Activated T-helper 2 cell treated with anti-CD3 and anti-CD28 coated beads, Interferon-gamma antibody, Interleukin-2, Interleukin-4, amounts not matched to agents 10 μg/mL and 5 μg/mL and 100 μg/mL, durations not matched to agents 14 hours and 24 hours and 36 hours (primary cell): ENCODE measurements at regions of chr12 and their contacts with region 1.

Region 1: DNA sequence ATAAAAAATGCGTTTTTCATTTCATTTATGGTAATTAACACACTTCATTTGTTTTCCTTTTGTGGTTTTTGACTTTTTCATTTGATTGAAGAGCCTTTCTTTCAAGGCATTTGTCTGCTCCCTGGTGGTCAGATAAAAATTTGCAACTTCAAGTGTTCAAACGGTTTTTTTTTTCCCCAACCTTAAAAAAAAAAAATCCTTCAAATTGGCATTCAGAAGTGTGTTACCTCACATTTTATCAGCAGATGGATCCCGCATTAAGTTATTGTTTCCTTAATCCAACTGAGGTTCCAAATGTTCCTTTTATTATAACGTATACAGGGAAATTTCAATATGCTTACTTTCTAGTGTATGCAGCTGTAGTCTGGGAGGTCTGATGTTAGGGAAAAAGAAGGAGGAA is 47.2 kb downstream of the MYF5 start:
- DNase-seq: no peak
- H3K4me3 Mint-ChIP-seq: no peak overlapping the region
- H3K27ac Mint-ChIP-seq: no peak overlapping the region
- H3K4me1 Mint-ChIP-seq: no peaks in the 10 kb centered on the region
- H3K27me3 Mint-ChIP-seq: peaks cover 3% of the 10 kb centered on the region

Region 2: DNA sequence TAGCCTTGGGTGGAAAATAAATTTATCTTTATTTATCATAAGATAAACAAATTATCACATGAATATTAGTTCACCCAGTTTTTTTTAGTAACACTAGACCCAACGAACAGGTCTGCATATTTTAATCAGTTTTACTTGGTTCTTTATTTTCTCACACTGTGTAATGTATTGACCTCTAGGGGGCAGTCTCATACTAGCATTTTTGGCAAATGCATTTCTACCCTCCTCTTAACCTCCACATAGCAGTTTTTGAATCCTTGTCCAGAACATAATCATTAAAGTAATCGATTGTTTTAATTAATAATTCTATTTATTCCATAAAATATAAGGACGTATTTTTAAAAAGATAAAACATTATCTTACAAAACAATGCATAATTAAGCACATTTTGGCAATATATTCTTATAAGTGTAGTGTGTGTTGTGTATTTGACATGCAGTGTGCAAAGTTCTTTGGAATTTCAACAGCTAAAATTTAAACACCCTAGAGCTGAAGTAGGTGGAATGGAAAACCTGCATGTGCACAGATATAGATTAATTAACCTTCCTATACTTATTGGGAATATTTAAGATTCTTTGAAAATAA is 351.4 kb before region 1 on chr12:
- intact Hi-C with region 1: loop called (anchors 2 kb)
- DNase-seq: no peak
- H3K4me3 Mint-ChIP-seq: no peak overlapping the region
- H3K27ac Mint-ChIP-seq: no peak overlapping the region
- H3K4me1 Mint-ChIP-seq: no peaks in the 10 kb centered on the region
- H3K27me3 Mint-ChIP-seq: no peaks in the 10 kb centered on the region

Region 3: DNA sequence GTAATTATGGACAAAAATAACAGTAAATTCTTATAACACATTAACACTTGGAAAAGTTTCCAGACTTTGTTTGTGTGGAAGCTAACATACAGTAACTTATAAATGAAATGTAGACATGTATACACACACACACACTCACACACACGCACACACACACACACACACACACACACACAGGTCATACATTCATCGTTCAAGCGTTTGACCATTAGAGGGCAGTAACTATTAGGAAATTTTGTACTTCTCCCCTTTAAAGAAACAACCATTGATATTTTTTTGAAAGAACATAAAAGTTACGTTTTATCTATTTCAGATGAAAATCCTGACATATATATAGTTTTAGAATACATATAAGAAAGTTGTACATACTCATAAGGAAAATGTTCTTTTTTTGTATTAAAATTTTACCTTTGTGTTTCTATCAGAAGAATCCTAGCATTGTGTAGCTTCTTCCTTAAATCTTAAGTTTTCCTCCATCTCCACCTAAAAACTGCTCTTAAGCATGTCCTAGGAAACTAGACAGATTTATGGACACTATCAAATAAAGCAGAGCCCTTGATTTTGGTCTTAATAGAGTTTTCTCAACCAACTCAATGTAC is 290.9 kb before region 1 on chr12:
- intact Hi-C with region 1: loop called (anchors 2 kb)
- DNase-seq: no peak
- H3K4me3 Mint-ChIP-seq: no peak overlapping the region
- H3K27ac Mint-ChIP-seq: no peak overlapping the region
- H3K4me1 Mint-ChIP-seq: no peaks in the 10 kb centered on the region
- H3K27me3 Mint-ChIP-seq: no peaks in the 10 kb centered on the region

Region 4: GRCh38 chr12:82203076-82203475 is 1439.2 kb after region 1 on chr12:
- intact Hi-C with region 1: no loop called
- DNase-seq: no peak
- H3K4me3 Mint-ChIP-seq: no peak overlapping the region
- H3K27ac Mint-ChIP-seq: no peak overlapping the region
- H3K4me1 Mint-ChIP-seq: no peaks in the 10 kb centered on the region
- H3K27me3 Mint-ChIP-seq: no peaks in the 10 kb centered on the region